GM13977 (cell line): ENCODE measurements at regions of chr4 and their contacts with region 1.

Region 1: GRCh38 chr4:121726642-121727268 is 30.0 kb upstream of the ANXA5 start:
- DNase-seq: peak; percentile 58
- CTCF ChIP-seq: peak; percentile 68

Region 2: DNA sequence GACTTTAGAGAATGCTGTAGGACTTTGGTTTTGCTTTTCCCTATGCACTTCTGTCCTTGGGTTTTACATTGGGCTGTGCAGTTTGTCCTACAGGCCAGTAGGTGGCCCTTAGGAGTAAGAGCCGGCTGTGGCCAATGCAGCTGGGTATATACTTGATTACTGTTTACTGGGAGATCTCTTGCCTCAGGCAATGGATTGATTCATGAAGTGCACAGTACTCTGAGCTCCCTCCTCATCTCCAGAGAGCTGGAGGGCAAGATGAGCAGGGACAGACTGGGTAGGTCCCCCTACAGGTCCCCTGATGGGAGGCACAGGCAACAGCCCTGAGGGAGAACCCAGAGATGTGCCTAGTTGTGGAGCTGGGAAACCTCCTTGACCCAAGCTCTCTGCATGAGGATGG is 242.1 kb before region 1 on chr4:
- in situ Hi-C with region 1: loop called (anchors 25 kb)
- DNase-seq: peak; percentile 46
- CTCF ChIP-seq: peak; percentile 82